IMR-90 (cell line): ENCODE measurements at regions of chr7 and their contacts with region 1.

Region 1: DNA sequence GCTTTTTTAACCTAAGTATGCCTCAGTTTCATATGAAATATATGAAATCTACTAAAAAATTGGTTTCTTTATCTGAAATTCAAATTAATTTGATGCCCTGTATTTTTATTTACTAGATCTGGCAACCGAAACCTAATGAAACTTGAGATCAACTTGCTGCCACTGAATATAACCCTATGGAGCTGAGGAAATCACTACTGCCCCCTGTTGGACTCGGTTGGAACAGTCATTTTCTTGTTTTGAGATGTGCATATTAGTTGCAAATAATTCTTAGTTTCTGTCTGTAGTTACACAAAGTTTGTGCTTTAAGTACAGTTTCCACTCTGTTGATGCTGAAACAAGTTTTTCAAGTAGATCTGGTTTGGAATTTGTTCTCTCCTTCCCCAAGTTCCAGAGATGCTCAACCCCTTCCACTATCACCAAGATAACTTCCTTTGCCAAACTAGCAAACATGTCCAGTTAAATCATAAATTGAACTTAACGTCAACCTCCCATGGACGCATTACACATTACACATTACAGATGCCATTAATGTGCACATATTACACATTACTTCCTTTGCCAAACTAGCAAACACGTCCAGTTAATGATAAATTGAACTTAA is 22.2 kb upstream of the EXOC4 start:
- DNase-seq: peak; percentile 56
- ATAC-seq: peak; percentile 73
- H3K4me3 ChIP-seq: no peak overlapping the region
- H3K27ac ChIP-seq: no peak overlapping the region
- H3K4me1 ChIP-seq: no peaks in the 10 kb centered on the region
- H3K27me3 ChIP-seq: peaks cover 7% of the 10 kb centered on the region
- CTCF ChIP-seq: peak; percentile 74
- POLR2A ChIP-seq: no peak
- RAD21 ChIP-seq: peak; percentile 73

Region 2: GRCh38 chr7:132655131-132655727 is 575.5 kb before region 1 on chr7:
- CTCF ChIA-PET with region 1: no interaction called
- POLR2A ChIA-PET with region 1: no interaction called
- dilution Hi-C with region 1: no loop called
- in situ Hi-C with region 1: no loop called
- intact Hi-C with region 1: loop called (anchors 5 kb)
- DNase-seq: no peak
- ATAC-seq: no peak
- H3K4me3 ChIP-seq: no peak overlapping the region
- H3K27ac ChIP-seq: no peak overlapping the region
- H3K4me1 ChIP-seq: no peaks in the 10 kb centered on the region
- H3K27me3 ChIP-seq: no peaks in the 10 kb centered on the region
- CTCF ChIP-seq: no peak
- POLR2A ChIP-seq: no peak
- RAD21 ChIP-seq: no peak

Region 3: DNA sequence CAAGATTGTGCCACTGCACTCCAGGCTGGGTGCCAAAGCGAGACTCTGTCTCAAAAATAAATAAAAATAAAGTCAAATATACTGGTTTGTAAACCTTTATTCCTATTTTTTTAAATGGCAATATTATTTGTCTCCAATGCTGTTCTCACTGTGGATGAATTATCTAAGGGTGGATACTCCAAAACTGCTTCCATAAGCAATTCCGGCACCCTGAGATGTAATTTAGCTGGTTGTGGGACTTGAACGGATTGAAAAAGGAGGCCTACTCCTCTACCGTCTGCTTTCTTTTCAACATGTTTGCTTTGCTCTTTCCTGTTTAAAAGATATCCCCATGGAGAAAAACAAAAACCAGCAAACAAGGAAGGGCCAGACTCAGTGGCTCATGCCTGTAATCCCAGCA is 1031.6 kb after region 1 on chr7:
- CTCF ChIA-PET with region 1: no interaction called
- POLR2A ChIA-PET with region 1: no interaction called
- dilution Hi-C with region 1: no loop called
- in situ Hi-C with region 1: no loop called
- intact Hi-C with region 1: no loop called
- DNase-seq: no peak
- ATAC-seq: no peak
- H3K4me3 ChIP-seq: no peak overlapping the region
- H3K27ac ChIP-seq: no peak overlapping the region
- H3K4me1 ChIP-seq: no peaks in the 10 kb centered on the region
- H3K27me3 ChIP-seq: peaks cover 4% of the 10 kb centered on the region; the same call in 1 of the 2 replicates
- CTCF ChIP-seq: no peak
- POLR2A ChIP-seq: no peak
- RAD21 ChIP-seq: no peak